ENCODE measurements at regions of chr13 and their contacts with region 1.

Region 1: GRCh38 chr13:110715395-110716235 is 2.1 kb downstream of the ING1 start:
- DNase-seq: peak; percentile 100
- ATAC-seq: peak; percentile 71
- H3K4me3 ChIP-seq: peak overlapping the region; percentile 90
- H3K27ac ChIP-seq: peak overlapping the region; percentile 67
- H3K4me1 ChIP-seq: no peaks in the 10 kb centered on the region; the same call in 1 of the 2 replicates
- H3K27me3 ChIP-seq: no peaks in the 10 kb centered on the region
- CTCF ChIP-seq: no peak
- POLR2A ChIP-seq: no peak
- RAD21 ChIP-seq: no peak

Region 2: GRCh38 chr13:109440320-109440719 is 1275.3 kb before region 1 on chr13:
- CTCF ChIA-PET with region 1: no interaction called
- POLR2A ChIA-PET with region 1: no interaction called
- dilution Hi-C with region 1: no loop called
- in situ Hi-C with region 1: no loop called
- intact Hi-C with region 1: no loop called
- DNase-seq: no peak
- ATAC-seq: no peak
- H3K4me3 ChIP-seq: no peak overlapping the region
- H3K27ac ChIP-seq: no peak overlapping the region
- H3K4me1 ChIP-seq: no peaks in the 10 kb centered on the region
- H3K27me3 ChIP-seq: peaks cover 10% of the 10 kb centered on the region
- CTCF ChIP-seq: no peak
- POLR2A ChIP-seq: no peak
- RAD21 ChIP-seq: no peak

Region 3: GRCh38 chr13:110615322-110616102 is 100.1 kb before region 1 on chr13 and contains the start of gene NAXD:
- CTCF ChIA-PET with region 1: no interaction called
- POLR2A ChIA-PET with region 1: interaction called, 4 read pairs
- dilution Hi-C with region 1: no loop called
- in situ Hi-C with region 1: no loop called
- intact Hi-C with region 1: loop called (anchors 2 kb)
- DNase-seq: peak; percentile 93
- ATAC-seq: peak; percentile 89
- H3K4me3 ChIP-seq: peak within 1 kb of the TSS; percentile 91
- H3K27ac ChIP-seq: peak within 1 kb of the TSS; percentile 91
- H3K4me1 ChIP-seq: peaks cover 11% of the 10 kb centered on the region
- H3K27me3 ChIP-seq: no peaks in the 10 kb centered on the region
- CTCF ChIP-seq: no peak
- POLR2A ChIP-seq: peak; percentile 52; the same call in 1 of the 2 replicates
- RAD21 ChIP-seq: no peak
- total RNA-seq, gene NAXD: 9.4 and 10.2 TPM in 2 replicates

Region 4: DNA sequence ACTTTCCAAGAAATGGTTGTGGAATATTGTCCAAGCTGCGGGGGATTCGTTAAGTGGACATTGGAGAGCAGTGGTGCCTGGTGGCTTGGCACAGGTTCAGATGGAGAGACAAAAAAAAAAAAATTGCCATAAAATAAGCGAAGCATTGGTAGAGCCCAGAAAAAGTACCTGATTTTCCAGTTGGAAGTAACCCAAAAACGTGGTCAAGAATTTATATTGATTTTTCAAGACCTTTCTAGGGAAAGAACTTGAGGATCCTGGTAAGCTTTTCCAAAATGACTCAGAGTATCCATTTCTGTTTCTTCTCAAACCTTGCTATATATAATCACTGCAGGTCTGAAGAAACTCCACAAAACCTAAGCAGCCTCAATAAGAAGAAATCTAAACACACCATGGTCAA is 92.5 kb after region 1 on chr13:
- CTCF ChIA-PET with region 1: no interaction called
- POLR2A ChIA-PET with region 1: no interaction called
- dilution Hi-C with region 1: no loop called
- in situ Hi-C with region 1: loop called (anchors 5 kb)
- intact Hi-C with region 1: no loop called
- DNase-seq: no peak
- ATAC-seq: no peak
- H3K4me3 ChIP-seq: no peak overlapping the region
- H3K27ac ChIP-seq: no peak overlapping the region
- H3K4me1 ChIP-seq: peaks cover 8% of the 10 kb centered on the region
- H3K27me3 ChIP-seq: peaks cover 27% of the 10 kb centered on the region
- CTCF ChIP-seq: no peak
- POLR2A ChIP-seq: no peak
- RAD21 ChIP-seq: no peak

Region 5: GRCh38 chr13:110824702-110825300 is 109.2 kb after region 1 on chr13:
- CTCF ChIA-PET with region 1: no interaction called
- POLR2A ChIA-PET with region 1: interaction called, 10 read pairs
- dilution Hi-C with region 1: no loop called
- in situ Hi-C with region 1: no loop called
- intact Hi-C with region 1: no loop called
- DNase-seq: no peak
- ATAC-seq: no peak
- H3K4me3 ChIP-seq: no peak overlapping the region
- H3K27ac ChIP-seq: no peak overlapping the region
- H3K4me1 ChIP-seq: no peaks in the 10 kb centered on the region
- H3K27me3 ChIP-seq: peaks cover 9% of the 10 kb centered on the region
- CTCF ChIP-seq: no peak
- POLR2A ChIP-seq: no peak
- RAD21 ChIP-seq: no peak

Region 6: GRCh38 chr13:110915057-110915873 is 199.7 kb after region 1 on chr13 and contains the start of gene ANKRD10:
- CTCF ChIA-PET with region 1: no interaction called
- POLR2A ChIA-PET with region 1: no interaction called
- dilution Hi-C with region 1: no loop called
- in situ Hi-C with region 1: no loop called
- intact Hi-C with region 1: loop called (anchors 1 kb)
- DNase-seq: peak; percentile 99
- ATAC-seq: peak; percentile 86
- H3K4me3 ChIP-seq: peak within 1 kb of the TSS; percentile 98
- H3K27ac ChIP-seq: peak within 1 kb of the TSS; percentile 100
- H3K4me1 ChIP-seq: peaks cover 8% of the 10 kb centered on the region
- H3K27me3 ChIP-seq: no peaks in the 10 kb centered on the region
- CTCF ChIP-seq: peak; percentile 94
- POLR2A ChIP-seq: peak; percentile 19
- RAD21 ChIP-seq: peak; percentile 80
- total RNA-seq, gene ANKRD10: 18.3 and 24.2 TPM in 2 replicates

Region 7: DNA sequence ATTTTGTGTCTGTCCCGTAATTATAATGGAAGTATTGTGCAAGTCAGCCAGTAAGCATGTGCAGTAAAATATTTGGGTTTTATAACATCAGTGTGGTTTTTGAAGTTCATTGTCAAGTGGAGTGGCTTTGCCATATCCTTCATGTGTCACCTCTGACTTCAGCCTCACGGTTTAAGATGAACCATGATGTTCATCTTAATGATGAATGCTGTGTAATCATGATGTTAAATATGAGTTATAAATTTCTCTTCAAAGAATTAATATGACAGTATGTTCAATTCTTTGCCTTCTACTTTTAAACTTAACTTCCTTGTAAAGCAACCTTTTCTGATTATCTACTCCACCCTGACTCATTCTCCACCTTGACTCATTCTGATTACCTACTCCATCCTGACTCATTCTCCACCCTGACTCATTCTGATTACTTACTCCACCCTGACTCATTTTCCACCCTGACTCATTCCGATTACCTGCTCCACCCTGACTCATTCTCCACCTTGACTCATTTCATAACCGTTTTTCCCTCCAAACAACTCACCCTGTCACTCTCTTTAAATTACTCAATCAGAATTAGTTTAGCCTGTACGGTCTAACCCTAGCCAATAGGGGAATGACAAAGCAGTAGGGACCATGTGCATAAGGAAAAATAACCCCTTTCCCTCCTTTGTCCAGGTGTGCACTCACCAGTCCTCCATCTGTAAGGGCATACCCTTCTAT is 249.6 kb after region 1 on chr13:
- CTCF ChIA-PET with region 1: no interaction called
- POLR2A ChIA-PET with region 1: no interaction called
- dilution Hi-C with region 1: no loop called
- in situ Hi-C with region 1: no loop called
- intact Hi-C with region 1: no loop called
- DNase-seq: peak; percentile 89
- ATAC-seq: no peak; the same call in 1 of the 2 replicates
- H3K4me3 ChIP-seq: no peak overlapping the region
- H3K27ac ChIP-seq: no peak overlapping the region; the same call in 1 of the 2 replicates
- H3K4me1 ChIP-seq: no peaks in the 10 kb centered on the region
- H3K27me3 ChIP-seq: no peaks in the 10 kb centered on the region
- CTCF ChIP-seq: no peak
- POLR2A ChIP-seq: no peak
- RAD21 ChIP-seq: no peak

Measured in IMR-90 (cell line).